Heart right ventricle (tissue), 16 donors: ENCODE measurements at regions of chr2 and their contacts with region 1.

Region 1: DNA sequence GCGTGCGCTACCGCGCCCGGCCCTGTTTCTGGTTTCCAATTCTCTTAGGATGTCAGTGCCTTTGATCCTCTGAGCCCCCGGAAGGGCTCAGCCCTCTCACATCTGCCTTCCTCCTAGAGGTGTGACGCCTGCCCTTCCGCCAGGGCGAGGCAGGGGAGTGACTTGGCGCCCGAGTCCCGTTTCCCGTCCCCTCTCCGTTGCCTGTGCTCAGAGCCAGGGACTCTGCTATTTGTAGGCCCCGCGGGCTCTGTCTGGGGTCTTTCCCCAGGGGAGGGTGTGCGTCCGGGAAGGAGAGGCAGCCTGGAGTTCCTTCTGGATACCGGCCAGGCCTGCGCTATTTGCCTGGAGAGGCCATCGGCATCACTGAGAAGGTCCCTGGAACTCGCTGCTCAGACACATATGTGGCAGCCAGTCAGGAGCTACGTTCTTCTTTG is 103.7 kb upstream of the TAF1B start:
- DNase-seq: peak; percentile 86 to 91
- ATAC-seq: peak; percentile 86 to 93 (median 90)
- H3K4me3 ChIP-seq: peak overlapping the region in 9 of 10 donors; percentile 14 to 53 (median 40)
- H3K27ac ChIP-seq: peak overlapping the region; percentile 70 to 92 (median 88)
- H3K4me1 ChIP-seq: peaks cover 9 to 42% (median 28%) of the 10 kb centered on the region in 9 donors
- H3K27me3 ChIP-seq: no peaks in the 10 kb centered on the region
- CTCF ChIP-seq: no peak

Region 2: GRCh38 chr2:9656270-9656766 is 83.2 kb before region 1 on chr2:
- intact Hi-C with region 1: loop called in 1 of 10 experiments (anchors 10 kb)
- DNase-seq: no peak
- ATAC-seq: no peak
- H3K4me3 ChIP-seq: no peak overlapping the region
- H3K27ac ChIP-seq: no peak overlapping the region
- H3K4me1 ChIP-seq: peaks cover 0 to 14% (median 0%) of the 10 kb centered on the region in 9 donors
- H3K27me3 ChIP-seq: no peaks in the 10 kb centered on the region
- CTCF ChIP-seq: no peak

Region 3: DNA sequence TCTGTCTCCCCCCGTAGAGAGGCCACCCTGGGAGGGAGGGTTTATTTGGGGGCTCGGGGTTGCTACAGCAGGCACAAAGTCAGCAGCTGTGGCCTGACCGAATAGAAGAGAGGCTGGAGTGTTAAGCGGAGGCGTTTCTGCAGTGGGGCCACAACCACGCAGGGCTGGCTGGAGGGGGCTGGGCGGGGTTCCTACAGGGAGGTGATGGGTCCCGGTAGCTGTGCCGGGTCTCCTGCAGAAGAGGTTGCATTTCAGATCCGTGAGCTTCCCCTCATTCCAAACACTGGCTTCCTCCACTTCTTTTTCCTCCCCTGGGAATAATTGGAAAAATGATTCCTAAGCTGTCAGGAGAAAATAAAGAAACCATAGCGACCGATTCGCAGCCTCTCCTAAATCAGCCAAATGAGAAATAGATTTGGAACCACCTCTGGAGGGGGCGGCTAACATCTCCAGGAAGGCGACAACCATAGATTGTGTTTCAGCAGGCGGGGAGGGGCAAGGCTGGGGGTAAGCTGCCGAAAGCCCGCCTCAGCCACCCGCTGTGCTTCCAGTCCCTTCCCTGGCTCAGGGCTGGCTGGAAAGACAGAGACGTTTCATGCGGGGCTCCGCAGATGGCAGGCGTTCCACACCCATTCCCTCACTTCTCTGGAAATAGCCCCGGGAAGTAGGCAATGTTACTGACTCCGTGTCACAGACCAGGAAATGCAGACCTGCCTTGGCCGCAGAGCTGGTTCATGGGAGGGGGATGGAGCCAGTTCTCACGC is 18.1 kb after region 1 on chr2:
- intact Hi-C with region 1: loop called in 1 of 10 experiments (anchors 2 kb)
- DNase-seq: peak in 1 of 2 donors; percentile 76
- ATAC-seq: peak; percentile 55 to 88 (median 80)
- H3K4me3 ChIP-seq: peak overlapping the region; percentile 4 to 48 (median 34)
- H3K27ac ChIP-seq: peak overlapping the region; percentile 1 to 92 (median 70)
- H3K4me1 ChIP-seq: peaks cover 10 to 76% (median 58%) of the 10 kb centered on the region in 9 donors
- H3K27me3 ChIP-seq: peaks cover 0 to 23% (median 0%) of the 10 kb centered on the region in 7 donors
- CTCF ChIP-seq: no peak